ENCODE measurements at regions of chrX and their contacts with region 1.

Region 1: GRCh38 chrX:96372313-96373046 is 312.2 kb upstream of the DIAPH2 start:
- DNase-seq: peak; percentile 70
- ATAC-seq: peak; percentile 88
- H3K4me3 ChIP-seq: no peak overlapping the region
- H3K27ac ChIP-seq: no peak overlapping the region
- H3K4me1 ChIP-seq: peaks cover 2% of the 10 kb centered on the region; the same call in 1 of the 2 replicates
- H3K27me3 ChIP-seq: no peaks in the 10 kb centered on the region
- CTCF ChIP-seq: peak; percentile 76
- POLR2A ChIP-seq: no peak
- RAD21 ChIP-seq: peak; percentile 81

Region 2: GRCh38 chrX:96182366-96182765 is 190.1 kb before region 1 on chrX:
- CTCF ChIA-PET with region 1: no interaction called
- POLR2A ChIA-PET with region 1: no interaction called
- dilution Hi-C with region 1: no loop called
- in situ Hi-C with region 1: no loop called
- intact Hi-C with region 1: no loop called
- DNase-seq: peak; percentile 15
- ATAC-seq: no peak
- H3K4me3 ChIP-seq: no peak overlapping the region
- H3K27ac ChIP-seq: no peak overlapping the region
- H3K4me1 ChIP-seq: no peaks in the 10 kb centered on the region
- H3K27me3 ChIP-seq: no peaks in the 10 kb centered on the region
- CTCF ChIP-seq: peak; percentile 28; the same call in 1 of the 2 replicates
- POLR2A ChIP-seq: no peak
- RAD21 ChIP-seq: peak; percentile 53

Region 3: GRCh38 chrX:96361844-96362243 is 10.6 kb before region 1 on chrX:
- CTCF ChIA-PET with region 1: no interaction called
- POLR2A ChIA-PET with region 1: no interaction called
- dilution Hi-C with region 1: no loop called
- in situ Hi-C with region 1: no loop called
- intact Hi-C with region 1: no loop called
- DNase-seq: no peak
- ATAC-seq: no peak
- H3K4me3 ChIP-seq: no peak overlapping the region
- H3K27ac ChIP-seq: no peak overlapping the region
- H3K4me1 ChIP-seq: no peaks in the 10 kb centered on the region
- H3K27me3 ChIP-seq: no peaks in the 10 kb centered on the region; the same call in 1 of the 2 replicates
- CTCF ChIP-seq: no peak
- POLR2A ChIP-seq: no peak
- RAD21 ChIP-seq: no peak

Region 4: GRCh38 chrX:96563663-96564062 is 191.2 kb after region 1 on chrX:
- CTCF ChIA-PET with region 1: no interaction called
- POLR2A ChIA-PET with region 1: no interaction called
- dilution Hi-C with region 1: no loop called
- in situ Hi-C with region 1: no loop called
- intact Hi-C with region 1: loop called (anchors 5 kb)
- DNase-seq: peak; percentile 64
- ATAC-seq: peak; percentile 48
- H3K4me3 ChIP-seq: no peak overlapping the region
- H3K27ac ChIP-seq: no peak overlapping the region
- H3K4me1 ChIP-seq: no peaks in the 10 kb centered on the region
- H3K27me3 ChIP-seq: no peaks in the 10 kb centered on the region
- CTCF ChIP-seq: no peak
- POLR2A ChIP-seq: no peak
- RAD21 ChIP-seq: no peak

Region 5: DNA sequence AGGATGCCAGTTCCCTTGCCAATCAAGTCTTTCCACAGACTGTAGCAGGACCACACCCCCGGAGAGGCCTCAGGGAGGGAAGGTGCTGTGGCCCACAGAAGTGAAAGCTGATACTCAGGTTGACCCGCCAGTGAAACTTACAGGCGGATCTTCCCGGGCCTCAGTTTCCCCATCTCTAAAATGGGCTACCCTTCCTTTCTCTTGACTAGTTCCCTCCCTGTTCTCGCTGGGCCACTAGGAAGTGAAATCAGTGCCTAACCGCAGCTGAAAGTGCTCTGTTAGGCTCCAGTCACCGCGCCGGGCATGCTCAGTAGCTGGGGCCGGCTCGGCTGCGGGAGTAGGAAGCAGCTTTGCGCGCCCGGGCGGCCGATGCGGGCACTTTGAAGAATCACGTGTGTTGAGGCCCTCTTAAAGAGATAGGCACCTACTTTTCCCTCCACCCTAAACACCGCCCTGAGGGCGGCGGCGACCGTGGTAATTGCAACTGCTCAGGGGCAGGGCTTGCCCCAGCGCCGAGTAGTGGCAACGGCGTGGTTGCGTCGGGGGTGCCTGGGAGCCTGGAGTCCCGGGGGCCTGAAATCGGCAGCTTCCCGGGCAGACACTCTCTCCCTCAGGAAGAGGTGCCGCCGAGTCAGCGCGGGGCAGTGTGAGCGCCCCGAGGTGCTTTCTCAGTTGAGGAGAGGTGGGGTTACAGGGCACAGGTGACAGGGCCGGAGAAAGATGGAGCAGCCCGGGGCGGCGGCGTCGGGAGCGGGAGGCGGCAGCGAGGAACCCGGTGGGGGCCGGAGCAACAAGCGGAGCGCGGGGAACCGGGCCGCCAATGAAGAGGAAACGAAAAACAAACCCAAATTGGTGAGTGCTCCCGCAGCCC is 312.1 kb after region 1 on chrX and contains the start of gene DIAPH2:
- CTCF ChIA-PET with region 1: no interaction called
- POLR2A ChIA-PET with region 1: interaction called, 10 read pairs
- dilution Hi-C with region 1: no loop called
- in situ Hi-C with region 1: no loop called
- intact Hi-C with region 1: loop called (anchors 1 kb)
- DNase-seq: peak; percentile 75
- ATAC-seq: peak; percentile 88
- H3K4me3 ChIP-seq: peak within 1 kb of the TSS; percentile 70
- H3K27ac ChIP-seq: peak within 1 kb of the TSS; percentile 78
- H3K4me1 ChIP-seq: no peaks in the 10 kb centered on the region; the same call in 1 of the 2 replicates
- H3K27me3 ChIP-seq: no peaks in the 10 kb centered on the region
- CTCF ChIP-seq: no peak
- POLR2A ChIP-seq: peak; percentile 38; the same call in 1 of the 2 replicates
- RAD21 ChIP-seq: no peak
- total RNA-seq, gene DIAPH2: 19.9 and 27.5 TPM in 2 replicates

Region 6: GRCh38 chrX:96770315-96770714 is 397.8 kb after region 1 on chrX:
- CTCF ChIA-PET with region 1: no interaction called
- POLR2A ChIA-PET with region 1: no interaction called
- dilution Hi-C with region 1: no loop called
- in situ Hi-C with region 1: no loop called
- intact Hi-C with region 1: loop called (anchors 5 kb)
- DNase-seq: peak; percentile 18
- ATAC-seq: no peak
- H3K4me3 ChIP-seq: no peak overlapping the region
- H3K27ac ChIP-seq: no peak overlapping the region
- H3K4me1 ChIP-seq: no peaks in the 10 kb centered on the region
- H3K27me3 ChIP-seq: no peaks in the 10 kb centered on the region
- CTCF ChIP-seq: peak; percentile 62
- POLR2A ChIP-seq: no peak
- RAD21 ChIP-seq: peak; percentile 72

Region 7: DNA sequence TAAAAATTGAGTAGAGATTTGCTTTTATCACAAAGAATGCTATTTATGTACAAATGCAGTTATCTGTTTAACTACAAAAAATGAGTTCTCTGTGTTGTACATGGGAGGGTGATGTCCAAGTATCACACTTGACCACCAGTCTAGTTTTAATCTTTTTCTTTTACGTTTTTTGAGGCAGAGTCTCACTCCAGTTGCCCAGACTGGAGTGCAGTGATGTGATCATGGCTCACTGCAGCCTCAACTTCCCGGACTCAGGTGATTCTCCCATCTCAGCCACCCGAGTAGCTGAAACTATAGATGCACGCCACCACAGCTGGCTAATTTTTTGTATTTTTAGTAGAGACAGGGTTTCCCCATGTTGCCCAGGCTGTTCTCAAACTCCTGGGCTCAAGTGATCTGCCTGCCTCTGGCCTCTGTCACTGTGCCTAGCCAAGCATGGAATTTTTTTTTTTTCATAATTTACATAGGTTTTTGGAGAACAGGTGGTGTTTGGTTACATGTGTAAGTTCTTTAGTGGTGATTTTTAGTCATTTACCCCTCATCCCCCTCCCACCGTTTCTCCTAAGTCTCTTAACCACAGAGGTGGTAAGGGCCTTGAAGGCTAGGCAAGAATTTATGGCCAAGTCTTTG is 463.3 kb after region 1 on chrX:
- CTCF ChIA-PET with region 1: no interaction called
- POLR2A ChIA-PET with region 1: no interaction called
- dilution Hi-C with region 1: no loop called
- in situ Hi-C with region 1: no loop called
- intact Hi-C with region 1: loop called (anchors 10 kb)
- DNase-seq: no peak
- ATAC-seq: no peak
- H3K4me3 ChIP-seq: no peak overlapping the region
- H3K27ac ChIP-seq: no peak overlapping the region
- H3K4me1 ChIP-seq: 0 out of 2 replicates have a peak, but pooled peaks cover 1% of the 10 kb centered on the region
- H3K27me3 ChIP-seq: no peaks in the 10 kb centered on the region
- CTCF ChIP-seq: no peak
- POLR2A ChIP-seq: no peak
- RAD21 ChIP-seq: no peak

Region 8: GRCh38 chrX:97000682-97001368 is 628.3 kb after region 1 on chrX:
- CTCF ChIA-PET with region 1: interaction called, 10 read pairs
- POLR2A ChIA-PET with region 1: no interaction called
- dilution Hi-C with region 1: no loop called
- in situ Hi-C with region 1: no loop called
- intact Hi-C with region 1: no loop called
- DNase-seq: no peak
- ATAC-seq: no peak
- H3K4me3 ChIP-seq: no peak overlapping the region
- H3K27ac ChIP-seq: no peak overlapping the region
- H3K4me1 ChIP-seq: no peaks in the 10 kb centered on the region
- H3K27me3 ChIP-seq: no peaks in the 10 kb centered on the region
- CTCF ChIP-seq: no peak
- POLR2A ChIP-seq: no peak
- RAD21 ChIP-seq: no peak

Region 9: GRCh38 chrX:97685753-97686152 is 1313.3 kb after region 1 on chrX:
- CTCF ChIA-PET with region 1: no interaction called
- POLR2A ChIA-PET with region 1: no interaction called
- dilution Hi-C with region 1: no loop called
- in situ Hi-C with region 1: no loop called
- intact Hi-C with region 1: loop called (anchors 10 kb)
- DNase-seq: peak; percentile 40
- ATAC-seq: peak; percentile 66; the same call in 1 of the 2 replicates
- H3K4me3 ChIP-seq: no peak overlapping the region
- H3K27ac ChIP-seq: no peak overlapping the region
- H3K4me1 ChIP-seq: no peaks in the 10 kb centered on the region
- H3K27me3 ChIP-seq: no peaks in the 10 kb centered on the region; the same call in none of the 2 replicates
- CTCF ChIP-seq: peak; percentile 63
- POLR2A ChIP-seq: no peak
- RAD21 ChIP-seq: peak; percentile 60